Caco-2 (cell line): ENCODE measurements at regions of chr20 and their contacts with region 1.

Region 1: GRCh38 chr20:61661583-61661982 is 404.1 kb downstream of the TAF4 start:
- DNase-seq: no peak
- H3K4me3 ChIP-seq: no peak overlapping the region
- H3K4me3 Mint-ChIP-seq: no peak overlapping the region
- H3K27ac Mint-ChIP-seq: no peak overlapping the region
- H3K4me1 ChIP-seq: no peaks in the 10 kb centered on the region
- H3K4me1 Mint-ChIP-seq: no peaks in the 10 kb centered on the region
- H3K27me3 ChIP-seq: peaks cover 3% of the 10 kb centered on the region
- H3K27me3 Mint-ChIP-seq: peaks cover 44% of the 10 kb centered on the region
- CTCF ChIP-seq: no peak

Region 2: DNA sequence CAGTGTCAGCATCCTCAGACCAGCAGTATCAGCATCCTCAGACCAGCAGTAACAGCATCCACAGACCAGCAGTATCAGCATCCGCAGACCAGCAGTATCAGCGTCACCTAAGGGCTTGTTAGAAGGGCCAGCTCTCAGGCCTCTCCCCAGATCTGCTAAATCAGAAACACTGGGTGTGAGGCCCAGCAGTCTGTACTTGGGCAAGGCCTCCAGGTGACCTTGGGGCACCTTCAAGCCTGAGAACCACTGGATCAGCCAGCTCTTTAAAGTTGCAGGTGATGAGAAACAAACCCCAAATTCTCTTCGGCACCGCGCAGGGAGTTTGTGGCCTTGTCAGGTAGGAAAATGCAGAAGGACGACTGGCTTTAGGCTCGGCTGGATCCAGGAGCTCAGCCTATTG is 700.0 kb before region 1 on chr20:
- CTCF ChIA-PET with region 1: no interaction called
- POLR2A ChIA-PET with region 1: interaction called, 12 read pairs
- intact Hi-C with region 1: no loop called
- DNase-seq: no peak
- H3K4me3 ChIP-seq: no peak overlapping the region
- H3K4me3 Mint-ChIP-seq: no peak overlapping the region
- H3K27ac Mint-ChIP-seq: no peak overlapping the region
- H3K4me1 ChIP-seq: no peaks in the 10 kb centered on the region
- H3K4me1 Mint-ChIP-seq: no peaks in the 10 kb centered on the region
- H3K27me3 ChIP-seq: no peaks in the 10 kb centered on the region
- H3K27me3 Mint-ChIP-seq: peaks cover 9% of the 10 kb centered on the region
- CTCF ChIP-seq: no peak

Region 3: GRCh38 chr20:61744691-61745396 is 83.3 kb after region 1 on chr20:
- CTCF ChIA-PET with region 1: no interaction called
- POLR2A ChIA-PET with region 1: no interaction called
- intact Hi-C with region 1: no loop called
- DNase-seq: no peak
- H3K4me3 ChIP-seq: no peak overlapping the region
- H3K4me3 Mint-ChIP-seq: no peak overlapping the region
- H3K27ac Mint-ChIP-seq: no peak overlapping the region
- H3K4me1 ChIP-seq: no peaks in the 10 kb centered on the region
- H3K4me1 Mint-ChIP-seq: no peaks in the 10 kb centered on the region
- H3K27me3 ChIP-seq: no peaks in the 10 kb centered on the region
- H3K27me3 Mint-ChIP-seq: peaks cover 25% of the 10 kb centered on the region
- CTCF ChIP-seq: no peak

Region 4: DNA sequence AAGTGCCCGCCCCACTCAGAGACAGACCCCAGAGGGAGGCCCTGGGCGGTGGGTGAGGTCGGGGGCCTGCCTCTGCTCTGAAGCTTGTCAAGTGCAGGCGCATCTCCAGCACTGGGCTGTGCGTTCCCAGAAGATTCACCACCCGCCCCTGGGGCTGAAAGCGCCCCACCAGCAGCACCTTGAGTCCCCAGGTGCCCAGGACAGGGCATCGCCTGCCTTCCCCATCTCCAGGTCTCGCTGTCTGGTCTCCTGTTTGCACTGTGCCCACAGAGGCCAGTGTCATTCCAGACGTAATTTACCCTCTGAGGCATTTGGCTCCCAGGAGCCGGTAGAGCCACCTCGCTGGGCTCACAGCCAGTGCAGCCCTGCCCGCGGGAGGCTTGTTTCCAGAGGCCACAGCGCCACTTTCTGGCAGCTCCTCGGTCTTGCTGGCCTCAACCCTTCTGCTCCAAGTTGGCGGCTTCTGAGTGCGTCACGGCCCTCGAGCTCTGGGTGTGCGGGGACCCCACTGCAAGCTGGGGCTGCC is 213.0 kb after region 1 on chr20:
- CTCF ChIA-PET with region 1: no interaction called
- POLR2A ChIA-PET with region 1: no interaction called
- intact Hi-C with region 1: no loop called
- DNase-seq: peak in 1 of 2 experiments; percentile 63
- H3K4me3 ChIP-seq: no peak overlapping the region
- H3K4me3 Mint-ChIP-seq: no peak overlapping the region
- H3K27ac Mint-ChIP-seq: no peak overlapping the region
- H3K4me1 ChIP-seq: no peaks in the 10 kb centered on the region
- H3K4me1 Mint-ChIP-seq: no peaks in the 10 kb centered on the region
- H3K27me3 ChIP-seq: peaks cover 5% of the 10 kb centered on the region
- H3K27me3 Mint-ChIP-seq: peaks cover 42% of the 10 kb centered on the region
- CTCF ChIP-seq: peak in 1 of 2 experiments; percentile 22